Activated CD4-positive, alpha-beta T cell treated with anti-CD3 and anti-CD28 coated beads, Interleukin-2, amount 10 ng/mL, durations not matched to agents 7 days and 5 days (primary cell): ENCODE measurements at regions of chr3 and their contacts with region 1.

Region 1: GRCh38 chr3:52001443-52001974 is 5.8 kb upstream of the RPL29 start:
- DNase-seq: peak; percentile 87
- H3K4me3 Mint-ChIP-seq: no peak overlapping the region
- H3K27ac Mint-ChIP-seq: peak overlapping the region; percentile 50
- H3K4me1 Mint-ChIP-seq: peaks cover 26% of the 10 kb centered on the region
- H3K27me3 Mint-ChIP-seq: peaks cover 10% of the 10 kb centered on the region

Region 2: GRCh38 chr3:51974963-51975851 is 26.3 kb before region 1 on chr3 and contains the start of gene ABHD14A:
- CTCF ChIA-PET with region 1: no interaction called
- POLR2A ChIA-PET with region 1: no interaction called
- DNase-seq: peak; percentile 67
- H3K4me3 Mint-ChIP-seq: peak within 1 kb of the TSS; percentile 96
- H3K27ac Mint-ChIP-seq: peak within 1 kb of the TSS; percentile 93
- H3K4me1 Mint-ChIP-seq: peaks cover 34% of the 10 kb centered on the region
- H3K27me3 Mint-ChIP-seq: no peaks in the 10 kb centered on the region
- total RNA-seq, gene ABHD14A: 11.5 to 16.7 TPM

Region 3: GRCh38 chr3:52123106-52123725 is 121.7 kb after region 1 on chr3:
- CTCF ChIA-PET with region 1: interaction called, 13 read pairs
- POLR2A ChIA-PET with region 1: no interaction called
- DNase-seq: peak; percentile 77
- H3K4me3 Mint-ChIP-seq: no peak overlapping the region
- H3K27ac Mint-ChIP-seq: no peak overlapping the region
- H3K4me1 Mint-ChIP-seq: peaks cover 18% of the 10 kb centered on the region
- H3K27me3 Mint-ChIP-seq: no peaks in the 10 kb centered on the region

Region 4: DNA sequence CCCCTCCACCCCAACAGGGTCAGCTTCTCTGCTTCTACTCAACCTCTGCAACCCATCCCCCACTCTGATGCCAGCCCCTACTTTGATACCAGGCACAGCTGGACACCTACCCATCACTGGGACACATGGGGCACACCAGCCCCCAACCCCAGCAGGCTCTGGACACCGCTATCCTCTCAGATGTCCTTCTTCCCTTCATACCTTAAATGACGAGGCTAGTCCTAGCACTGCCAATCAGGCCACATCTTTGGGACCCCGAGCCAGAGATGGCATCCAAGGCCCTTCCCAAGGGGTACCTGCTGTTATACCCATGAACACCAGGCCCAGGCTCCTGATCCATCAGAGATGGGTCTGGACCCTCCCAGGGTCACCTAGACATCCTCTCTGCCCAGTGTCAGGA is 142.1 kb after region 1 on chr3:
- CTCF ChIA-PET with region 1: interaction called, 17 read pairs
- POLR2A ChIA-PET with region 1: no interaction called
- DNase-seq: no peak
- H3K4me3 Mint-ChIP-seq: no peak overlapping the region
- H3K27ac Mint-ChIP-seq: no peak overlapping the region
- H3K4me1 Mint-ChIP-seq: peaks cover 10% of the 10 kb centered on the region
- H3K27me3 Mint-ChIP-seq: no peaks in the 10 kb centered on the region